HepG2 (cell line): ENCODE measurements at regions of chr7 and their contacts with region 1.

Region 1: DNA sequence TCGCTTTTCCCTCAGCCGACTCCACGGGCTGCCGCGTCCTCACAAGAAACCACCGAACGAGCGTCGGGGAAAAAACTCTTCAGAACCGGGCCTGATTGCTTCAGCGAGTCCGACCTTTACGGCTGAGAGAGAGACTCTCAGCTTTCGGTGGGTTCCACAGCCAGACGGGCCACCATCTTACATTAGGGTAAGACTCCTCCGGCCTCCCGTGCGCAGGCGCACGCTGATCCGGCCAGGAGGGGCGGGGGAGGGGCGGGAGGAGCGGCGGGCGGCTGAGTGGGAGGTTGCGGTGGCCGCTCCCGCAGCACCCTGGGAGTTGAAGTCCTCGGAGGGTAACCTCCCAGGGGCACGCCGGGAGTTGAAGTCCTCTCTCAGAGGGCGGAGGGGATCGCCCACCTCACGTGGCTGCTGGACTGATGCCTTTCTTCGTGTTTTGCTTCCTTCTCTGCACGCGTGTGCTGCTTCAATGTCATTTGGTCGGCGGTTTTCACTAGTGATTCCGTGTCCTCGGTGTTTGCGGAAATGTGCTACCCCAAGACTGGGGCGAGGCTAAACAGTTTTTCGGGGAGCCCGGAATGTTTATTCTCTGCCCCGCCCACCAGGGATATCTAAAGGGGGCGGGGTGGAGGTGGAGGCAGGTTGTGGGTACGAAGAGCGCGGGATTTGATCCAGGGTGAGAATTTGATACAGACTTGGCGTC is at the start of gene CNOT4:
- DNase-seq: peak; percentile 92
- ATAC-seq: peak; percentile 96
- H3K4me3 ChIP-seq: peak within 1 kb of the TSS; percentile 82 to 92 (median 84)
- H3K27ac ChIP-seq: peak within 1 kb of the TSS; percentile 92
- H3K4me1 ChIP-seq: peaks cover 31% of the 10 kb centered on the region
- H3K27me3 ChIP-seq: no peaks in the 10 kb centered on the region; a peak in 1 of 5 replicates
- CTCF ChIP-seq: no peak
- EP300 ChIP-seq: 0 out of 4 replicates have a peak, but pooled peaks of 1 of the 2 experiments have one; percentile 9
- POLR2A ChIP-seq: peak; percentile 78 to 89
- RAD21 ChIP-seq: no peak
- total RNA-seq, gene CNOT4: 7.4 and 11.5 TPM in 2 replicates

Region 2: DNA sequence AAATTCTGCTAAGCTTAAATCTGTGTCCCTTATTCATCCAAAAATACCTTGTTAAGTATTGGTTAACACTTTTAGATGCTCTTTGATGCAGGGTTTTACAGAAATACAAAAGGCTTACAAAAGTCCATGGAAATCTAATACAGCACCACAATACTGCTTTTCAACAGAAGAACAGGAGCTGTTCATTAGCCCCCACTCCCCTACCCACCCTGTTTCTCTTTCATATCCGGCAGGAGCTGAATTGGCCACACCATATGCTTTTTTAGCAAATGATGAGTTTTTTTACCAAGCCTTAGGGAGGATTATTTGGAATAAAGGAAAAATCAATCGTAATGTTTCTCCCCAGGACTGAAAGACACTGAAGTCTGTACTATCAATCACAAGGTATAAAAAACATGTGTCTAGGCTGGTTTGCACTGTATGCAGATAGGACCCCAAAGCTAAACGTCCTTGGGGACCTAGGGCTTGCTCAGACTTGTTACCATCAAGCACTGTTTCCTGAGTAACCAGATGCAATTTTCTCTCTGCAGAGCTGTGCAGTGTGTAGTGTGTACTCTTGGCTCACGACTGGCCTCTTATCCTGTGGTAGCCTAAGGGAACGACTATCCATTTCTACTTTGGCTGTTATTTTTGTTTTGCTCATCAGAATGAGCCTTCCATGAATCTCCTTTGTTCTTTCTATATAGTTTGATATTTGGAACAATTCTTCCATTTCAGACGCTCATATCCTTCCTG is 1526.2 kb before region 1 on chr7:
- CTCF ChIA-PET with region 1: no interaction called
- POLR2A ChIA-PET with region 1: no interaction called
- in situ Hi-C with region 1: no loop called
- intact Hi-C with region 1: loop called (anchors 10 kb)
- DNase-seq: no peak
- ATAC-seq: no peak
- H3K4me3 ChIP-seq: no peak overlapping the region
- H3K27ac ChIP-seq: no peak overlapping the region
- H3K4me1 ChIP-seq: no peaks in the 10 kb centered on the region
- H3K27me3 ChIP-seq: no peaks in the 10 kb centered on the region
- CTCF ChIP-seq: no peak
- EP300 ChIP-seq: no peak
- POLR2A ChIP-seq: no peak
- RAD21 ChIP-seq: no peak

Region 3: GRCh38 chr7:135281363-135281949 is 228.6 kb before region 1 on chr7:
- CTCF ChIA-PET with region 1: interaction called, 3 read pairs
- POLR2A ChIA-PET with region 1: no interaction called
- in situ Hi-C with region 1: no loop called
- intact Hi-C with region 1: loop called (anchors 1 kb)
- DNase-seq: peak; percentile 78
- ATAC-seq: peak; percentile 97
- H3K4me3 ChIP-seq: no peak overlapping the region
- H3K27ac ChIP-seq: no peak overlapping the region
- H3K4me1 ChIP-seq: 0 out of 2 replicates have a peak, but pooled peaks cover 11% of the 10 kb centered on the region
- H3K27me3 ChIP-seq: no peaks in the 10 kb centered on the region
- CTCF ChIP-seq: peak; percentile 99
- EP300 ChIP-seq: no peak
- POLR2A ChIP-seq: no peak
- RAD21 ChIP-seq: peak; percentile 96

Region 4: DNA sequence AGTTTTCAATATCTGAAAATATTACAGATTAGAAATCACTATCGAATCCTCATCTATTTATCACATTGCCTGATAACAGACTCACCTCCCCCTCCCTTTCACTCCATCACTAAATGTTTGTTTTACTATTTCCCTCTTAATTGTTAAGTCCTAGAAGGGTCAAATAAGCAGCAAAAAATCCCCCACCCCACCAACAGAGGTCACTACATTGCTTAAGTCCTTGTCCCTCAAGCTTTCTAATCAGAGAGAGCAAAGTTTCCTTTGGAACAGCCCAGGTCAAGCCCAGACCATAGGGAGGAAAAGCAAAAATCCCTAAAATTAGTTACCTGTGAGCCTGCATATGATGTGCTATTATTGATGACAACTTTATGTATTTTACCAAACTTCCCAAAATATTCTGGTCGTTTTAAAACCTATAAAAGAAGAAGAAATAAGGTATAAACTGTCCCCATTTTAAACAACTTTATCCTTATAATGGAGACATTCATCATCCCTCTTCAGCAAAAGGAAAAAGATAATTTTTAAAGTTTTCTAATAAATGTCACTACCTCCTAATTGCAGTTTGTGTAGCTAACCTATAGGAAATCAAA is 95.1 kb before region 1 on chr7:
- CTCF ChIA-PET with region 1: interaction called, 3 read pairs
- POLR2A ChIA-PET with region 1: no interaction called
- in situ Hi-C with region 1: no loop called
- intact Hi-C with region 1: loop called (anchors 2 kb)
- DNase-seq: peak; percentile 74
- ATAC-seq: peak; percentile 85
- H3K4me3 ChIP-seq: no peak overlapping the region
- H3K27ac ChIP-seq: no peak overlapping the region
- H3K4me1 ChIP-seq: peaks cover 18% of the 10 kb centered on the region
- H3K27me3 ChIP-seq: no peaks in the 10 kb centered on the region
- CTCF ChIP-seq: peak; percentile 68
- EP300 ChIP-seq: no peak
- POLR2A ChIP-seq: no peak
- RAD21 ChIP-seq: no peak

Region 5: GRCh38 chr7:135558337-135558767 is 48.3 kb after region 1 on chr7:
- CTCF ChIA-PET with region 1: interaction called, 19 read pairs
- POLR2A ChIA-PET with region 1: interaction called, 3 read pairs
- in situ Hi-C with region 1: loop called (anchors 5 kb)
- intact Hi-C with region 1: loop called (anchors 1 kb)
- DNase-seq: peak; percentile 71
- ATAC-seq: peak; percentile 72
- H3K4me3 ChIP-seq: peak overlapping the region; percentile 72 to 86 (median 75)
- H3K27ac ChIP-seq: peak overlapping the region; percentile 93
- H3K4me1 ChIP-seq: peaks cover 30% of the 10 kb centered on the region
- H3K27me3 ChIP-seq: no peaks in the 10 kb centered on the region; a peak in 1 of 5 replicates
- CTCF ChIP-seq: peak; percentile 72
- EP300 ChIP-seq: no peak
- POLR2A ChIP-seq: no peak
- RAD21 ChIP-seq: no peak

Region 6: GRCh38 chr7:135645296-135645904 is 135.3 kb after region 1 on chr7:
- CTCF ChIA-PET with region 1: no interaction called
- POLR2A ChIA-PET with region 1: no interaction called
- in situ Hi-C with region 1: no loop called
- intact Hi-C with region 1: loop called (anchors 1 kb)
- DNase-seq: peak; percentile 31
- ATAC-seq: peak; percentile 72
- H3K4me3 ChIP-seq: no peak overlapping the region
- H3K27ac ChIP-seq: no peak overlapping the region
- H3K4me1 ChIP-seq: no peaks in the 10 kb centered on the region
- H3K27me3 ChIP-seq: no peaks in the 10 kb centered on the region
- CTCF ChIP-seq: peak; percentile 60
- EP300 ChIP-seq: no peak
- POLR2A ChIP-seq: no peak
- RAD21 ChIP-seq: no peak

Region 7: GRCh38 chr7:135662373-135663114 is 152.5 kb after region 1 on chr7 and contains the start of gene STMP1:
- CTCF ChIA-PET with region 1: no interaction called
- POLR2A ChIA-PET with region 1: no interaction called
- in situ Hi-C with region 1: no loop called
- intact Hi-C with region 1: loop called (anchors 5 kb)
- DNase-seq: peak; percentile 81
- ATAC-seq: peak; percentile 90
- H3K4me3 ChIP-seq: peak within 1 kb of the TSS; percentile 81 to 96 (median 84)
- H3K27ac ChIP-seq: peak within 1 kb of the TSS; percentile 79
- H3K4me1 ChIP-seq: peaks cover 44% of the 10 kb centered on the region
- H3K27me3 ChIP-seq: no peaks in the 10 kb centered on the region; a peak in 1 of 5 replicates
- CTCF ChIP-seq: peak; percentile 90
- EP300 ChIP-seq: no peak
- POLR2A ChIP-seq: peak; percentile 81 to 95
- RAD21 ChIP-seq: peak; percentile 72
- total RNA-seq, gene STMP1: 7.2 and 10.2 TPM in 2 replicates

Region 8: GRCh38 chr7:135855846-135856245 is 345.8 kb after region 1 on chr7:
- CTCF ChIA-PET with region 1: no interaction called
- POLR2A ChIA-PET with region 1: no interaction called
- in situ Hi-C with region 1: no loop called
- intact Hi-C with region 1: no loop called
- DNase-seq: no peak
- ATAC-seq: no peak
- H3K4me3 ChIP-seq: no peak overlapping the region
- H3K27ac ChIP-seq: no peak overlapping the region
- H3K4me1 ChIP-seq: no peaks in the 10 kb centered on the region
- H3K27me3 ChIP-seq: no peaks in the 10 kb centered on the region
- CTCF ChIP-seq: no peak
- EP300 ChIP-seq: no peak
- POLR2A ChIP-seq: no peak
- RAD21 ChIP-seq: no peak